ENCODE measurements at regions of chr4 and their contacts with region 1.

Region 1: DNA sequence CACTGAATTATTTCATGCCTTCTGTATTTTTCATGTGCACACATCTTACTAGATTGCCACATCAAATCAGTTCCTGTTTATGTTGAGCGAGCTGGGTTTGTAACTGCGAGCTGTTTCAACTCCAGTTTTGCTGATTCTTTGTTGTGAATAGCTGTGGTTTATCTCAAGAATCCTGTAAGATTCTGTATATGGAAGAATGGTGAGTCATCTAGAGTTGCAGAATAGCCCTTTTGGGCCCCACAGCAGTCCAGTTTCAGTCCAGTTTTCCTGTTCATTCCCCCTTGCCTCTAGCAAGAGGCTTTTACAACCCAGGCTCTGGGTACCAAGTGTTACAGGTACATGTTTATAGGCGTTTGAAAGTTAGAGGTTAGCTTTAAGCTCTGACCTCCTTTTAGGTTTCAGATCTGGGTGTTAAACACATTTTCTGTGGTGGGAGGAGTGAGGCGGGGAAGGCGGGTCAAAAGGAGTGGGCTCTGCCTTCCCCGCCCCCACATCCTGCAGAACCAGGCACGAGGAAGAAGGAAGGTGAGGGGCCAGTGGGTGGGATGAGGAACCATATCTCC is 32.7 kb downstream of the TBC1D14 start:
- DNase-seq: peak; percentile 60
- H3K4me3 Mint-ChIP-seq: no peak overlapping the region
- H3K27ac Mint-ChIP-seq: peak overlapping the region; percentile 73
- H3K4me1 Mint-ChIP-seq: peaks cover 59% of the 10 kb centered on the region
- H3K27me3 Mint-ChIP-seq: no peaks in the 10 kb centered on the region

Region 2: DNA sequence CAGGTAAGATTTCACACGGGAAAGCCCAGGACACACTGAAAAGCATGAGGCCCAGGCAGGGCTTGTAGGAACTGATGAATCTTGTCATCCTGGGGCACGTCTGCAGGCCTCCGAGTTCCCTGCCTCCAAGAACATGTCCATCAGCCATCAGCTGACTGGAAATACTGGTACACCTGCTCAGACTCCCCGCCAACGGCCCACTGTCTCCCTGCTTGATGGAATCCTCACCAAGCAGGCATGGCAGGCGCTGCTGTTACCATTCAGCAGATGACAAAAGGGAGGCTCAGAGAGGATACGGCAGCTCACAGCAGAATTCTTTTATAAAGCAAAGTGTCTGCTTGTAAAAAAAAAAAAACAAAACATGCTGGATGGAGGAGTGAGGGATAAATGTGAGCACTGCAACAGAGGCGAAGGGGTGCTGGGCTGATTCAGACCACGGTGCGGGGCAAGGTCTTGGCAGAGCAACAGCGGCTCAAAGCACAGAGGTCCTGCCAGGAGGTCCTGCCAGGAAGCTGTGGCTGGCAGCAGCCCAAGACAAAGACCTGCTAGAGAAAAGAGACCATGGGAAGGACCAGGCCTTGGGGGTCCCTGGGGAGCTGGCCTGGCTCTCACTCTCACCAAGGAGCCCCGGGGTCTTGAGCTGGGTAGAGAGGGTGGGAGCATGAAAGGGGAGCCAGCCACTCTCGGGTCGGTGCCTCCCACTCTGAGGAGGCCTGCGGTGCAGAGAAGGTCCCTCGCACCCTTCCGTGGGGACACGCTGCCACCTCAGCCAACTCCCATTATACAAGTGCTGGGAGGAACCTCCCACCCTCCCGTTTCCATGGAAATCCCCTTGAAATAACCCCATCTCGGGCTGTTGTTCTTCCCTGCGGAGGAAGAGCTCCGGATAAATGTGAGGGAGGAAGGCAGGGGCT is 495.5 kb before region 1 on chr4:
- CTCF ChIA-PET with region 1: no interaction called
- intact Hi-C with region 1: no loop called
- DNase-seq: no peak
- H3K4me3 Mint-ChIP-seq: no peak overlapping the region
- H3K27ac Mint-ChIP-seq: no peak overlapping the region
- H3K4me1 Mint-ChIP-seq: no peaks in the 10 kb centered on the region
- H3K27me3 Mint-ChIP-seq: peaks cover 2% of the 10 kb centered on the region

Region 3: GRCh38 chr4:6815029-6815836 is 127.1 kb before region 1 on chr4:
- CTCF ChIA-PET with region 1: no interaction called
- intact Hi-C with region 1: no loop called
- DNase-seq: no peak
- H3K4me3 Mint-ChIP-seq: no peak overlapping the region
- H3K27ac Mint-ChIP-seq: no peak overlapping the region
- H3K4me1 Mint-ChIP-seq: peaks cover 16% of the 10 kb centered on the region
- H3K27me3 Mint-ChIP-seq: no peaks in the 10 kb centered on the region

Region 4: GRCh38 chr4:6898763-6899162 is 43.6 kb before region 1 on chr4:
- CTCF ChIA-PET with region 1: no interaction called
- intact Hi-C with region 1: loop called (anchors 1 kb)
- DNase-seq: no peak
- H3K4me3 Mint-ChIP-seq: no peak overlapping the region
- H3K27ac Mint-ChIP-seq: peak overlapping the region; percentile 69
- H3K4me1 Mint-ChIP-seq: peaks cover 20% of the 10 kb centered on the region
- H3K27me3 Mint-ChIP-seq: no peaks in the 10 kb centered on the region

Region 5: GRCh38 chr4:6917461-6918271 is 24.7 kb before region 1 on chr4:
- CTCF ChIA-PET with region 1: interaction called, 3 read pairs
- intact Hi-C with region 1: loop called (anchors 2 kb)
- DNase-seq: peak; percentile 65
- H3K4me3 Mint-ChIP-seq: peak overlapping the region; percentile 26
- H3K27ac Mint-ChIP-seq: peak overlapping the region; percentile 80
- H3K4me1 Mint-ChIP-seq: peaks cover 63% of the 10 kb centered on the region
- H3K27me3 Mint-ChIP-seq: no peaks in the 10 kb centered on the region

Region 6: DNA sequence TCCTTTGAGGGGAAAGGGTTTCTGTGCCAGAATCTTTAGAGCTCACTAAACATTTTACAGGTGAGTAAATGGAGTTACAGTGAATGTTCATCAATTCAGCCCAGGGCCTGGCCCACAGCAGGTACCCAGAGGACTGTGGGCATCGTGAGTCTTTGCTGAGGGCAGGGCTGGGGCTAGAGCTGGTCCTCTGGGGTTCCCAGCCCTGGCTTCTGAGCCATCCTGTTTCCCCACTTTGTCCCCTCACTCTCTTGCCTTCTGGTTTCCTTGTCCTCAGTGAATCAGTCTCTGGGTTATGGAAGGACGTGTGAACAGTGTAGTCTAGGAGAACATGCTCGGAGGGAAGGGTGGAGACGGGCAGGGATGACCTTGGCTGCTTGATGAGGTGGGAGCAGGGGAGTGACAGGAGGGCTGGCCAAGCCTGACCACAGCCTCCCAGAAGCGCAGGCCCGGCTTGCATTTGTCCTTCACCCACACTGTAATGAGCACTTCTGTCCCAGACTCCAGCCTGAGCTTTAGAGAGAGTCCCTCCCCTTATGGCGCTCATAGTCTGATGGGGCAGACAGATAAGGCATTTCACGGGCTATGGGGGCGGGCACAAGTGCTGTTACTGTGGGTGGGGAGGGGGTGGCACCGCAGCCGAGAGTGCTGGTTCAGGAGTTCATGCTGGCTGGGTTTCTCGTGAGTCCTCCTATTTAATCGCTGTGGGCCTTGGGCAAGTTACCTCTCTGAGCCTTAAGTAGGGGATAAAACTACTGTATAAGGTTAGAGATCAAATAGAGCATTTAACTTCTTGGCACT is 15.4 kb before region 1 on chr4:
- CTCF ChIA-PET with region 1: interaction called, 3 read pairs
- intact Hi-C with region 1: loop called (anchors 1 kb)
- DNase-seq: peak; percentile 74
- H3K4me3 Mint-ChIP-seq: peak overlapping the region; percentile 49
- H3K27ac Mint-ChIP-seq: peak overlapping the region; percentile 85
- H3K4me1 Mint-ChIP-seq: peaks cover 67% of the 10 kb centered on the region
- H3K27me3 Mint-ChIP-seq: no peaks in the 10 kb centered on the region

Region 7: DNA sequence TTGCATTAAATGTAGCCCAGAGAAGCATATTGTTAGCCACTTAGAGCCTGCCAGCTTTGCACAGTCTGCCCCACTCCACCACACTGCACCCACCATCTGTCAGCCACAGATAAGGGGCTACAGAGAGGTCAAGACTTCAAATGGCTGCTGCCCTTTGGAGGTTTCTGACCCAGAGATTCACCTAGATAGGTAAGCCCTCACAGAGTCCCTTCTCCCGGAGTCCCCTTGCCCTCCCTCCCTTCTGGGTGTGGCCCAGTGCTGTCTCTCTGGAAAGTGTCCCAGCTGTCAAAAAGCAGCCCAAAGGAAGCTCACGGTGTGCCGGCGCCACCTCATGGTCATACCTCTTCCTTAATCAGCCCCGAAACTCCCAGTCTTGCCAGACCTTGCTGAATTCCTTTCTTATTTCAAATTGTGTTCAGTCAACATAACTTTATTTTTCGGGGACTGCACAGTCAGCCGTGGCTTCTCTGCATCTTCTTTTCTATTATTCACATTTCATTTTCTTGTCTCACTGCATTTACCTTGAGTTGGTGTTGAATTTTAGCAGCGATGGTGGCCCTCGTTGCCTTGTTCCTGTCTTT is 139.7 kb after region 1 on chr4:
- CTCF ChIA-PET with region 1: no interaction called
- intact Hi-C with region 1: no loop called
- DNase-seq: peak; percentile 69
- H3K4me3 Mint-ChIP-seq: no peak overlapping the region
- H3K27ac Mint-ChIP-seq: no peak overlapping the region
- H3K4me1 Mint-ChIP-seq: no peaks in the 10 kb centered on the region
- H3K27me3 Mint-ChIP-seq: peaks cover 18% of the 10 kb centered on the region

Region 8: GRCh38 chr4:7192252-7193029 is 250.1 kb after region 1 on chr4 and contains the start of gene SORCS2:
- CTCF ChIA-PET with region 1: no interaction called
- intact Hi-C with region 1: no loop called
- DNase-seq: peak; percentile 40
- H3K4me3 Mint-ChIP-seq: peak within 1 kb of the TSS; percentile 4
- H3K27ac Mint-ChIP-seq: no peak within 1 kb of the TSS
- H3K4me1 Mint-ChIP-seq: peaks cover 1% of the 10 kb centered on the region
- H3K27me3 Mint-ChIP-seq: peaks cover 42% of the 10 kb centered on the region
- total RNA-seq, gene SORCS2: 0.07 to 0.15 TPM